Ovary (tissue), 10 donors: ENCODE measurements at regions of chr10 and their contacts with region 1.

Region 1: DNA sequence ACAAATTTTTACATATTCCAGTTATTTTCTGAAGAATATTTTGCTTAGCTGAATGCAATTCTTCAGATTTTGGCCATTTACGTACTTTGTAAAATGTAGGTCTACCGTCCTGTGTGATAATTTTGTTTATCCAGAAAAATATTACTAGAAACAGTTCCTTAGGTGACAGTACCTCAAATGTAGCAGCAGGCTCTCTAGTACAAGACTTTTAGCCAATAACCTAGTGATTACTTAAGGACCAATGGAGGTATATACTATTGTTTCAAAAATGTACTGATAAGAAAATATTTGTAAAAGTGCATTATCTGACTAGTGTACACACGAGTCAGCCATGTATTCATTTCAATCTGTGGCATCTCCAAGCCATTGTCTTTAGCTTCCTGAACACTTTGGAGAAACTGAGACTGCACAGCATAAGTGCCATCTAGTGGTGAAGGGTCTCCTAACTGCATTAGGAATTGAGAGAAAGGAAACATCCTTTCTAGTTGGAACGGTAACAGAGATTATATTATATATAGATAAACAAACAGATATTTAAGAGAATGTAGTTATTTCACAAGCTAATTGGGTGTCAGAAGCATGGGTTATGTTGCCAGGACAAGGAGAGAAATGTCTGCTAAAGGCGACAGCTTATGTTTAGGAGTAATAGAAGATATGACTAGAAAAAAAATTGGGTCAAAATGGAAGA is 23.7 kb downstream of the RTKN2 start:
- DNase-seq: peak in 1 of 5 donors; percentile 53
- H3K4me3 ChIP-seq: no peak overlapping the region
- H3K27ac ChIP-seq: no peak overlapping the region
- H3K4me1 ChIP-seq: peaks cover 3% of the 10 kb centered on the region
- H3K27me3 ChIP-seq: no peaks in the 10 kb centered on the region
- CTCF ChIP-seq: peak; percentile 68 to 84 (median 69)
- EP300 ChIP-seq: no peak
- POLR2A ChIP-seq: no peak

Region 2: GRCh38 chr10:62038609-62039190 is 206.2 kb before region 1 on chr10:
- intact Hi-C with region 1: loop called in 3 of 4 experiments (anchors 5 to 10 kb)
- DNase-seq: peak; percentile 72 to 84 (median 79)
- H3K4me3 ChIP-seq: no peak overlapping the region
- H3K27ac ChIP-seq: no peak overlapping the region
- H3K4me1 ChIP-seq: peaks cover 2% of the 10 kb centered on the region
- H3K27me3 ChIP-seq: no peaks in the 10 kb centered on the region
- CTCF ChIP-seq: peak; percentile 71 to 87 (median 78)
- EP300 ChIP-seq: no peak
- POLR2A ChIP-seq: no peak